ENCODE measurements at regions of chr17 and their contacts with region 1.

Region 1: GRCh38 chr17:51371732-51372151 is 111.4 kb downstream of the UTP18 start:
- DNase-seq: peak; percentile 28
- ATAC-seq: peak; percentile 94
- H3K4me3 ChIP-seq: no peak overlapping the region
- H3K27ac ChIP-seq: no peak overlapping the region
- H3K4me1 ChIP-seq: no peaks in the 10 kb centered on the region
- H3K27me3 ChIP-seq: peaks cover 5% of the 10 kb centered on the region; the same call in 1 of the 2 replicates
- CTCF ChIP-seq: peak; percentile 87

Region 2: GRCh38 chr17:50931144-50931908 is 440.4 kb before region 1 on chr17:
- CTCF ChIA-PET with region 1: no interaction called
- POLR2A ChIA-PET with region 1: no interaction called
- in situ Hi-C with region 1: no loop called
- intact Hi-C with region 1: no loop called
- DNase-seq: no peak
- ATAC-seq: peak; percentile 61
- H3K4me3 ChIP-seq: peak overlapping the region; percentile 30 to 55
- H3K27ac ChIP-seq: peak overlapping the region; percentile 41; the same call in 1 of the 2 replicates
- H3K4me1 ChIP-seq: 0 out of 2 replicates have a peak, but pooled peaks cover 5% of the 10 kb centered on the region
- H3K27me3 ChIP-seq: no peaks in the 10 kb centered on the region
- CTCF ChIP-seq: no peak

Region 3: GRCh38 chr17:51279183-51279582 is 92.6 kb before region 1 on chr17:
- CTCF ChIA-PET with region 1: no interaction called
- POLR2A ChIA-PET with region 1: no interaction called
- in situ Hi-C with region 1: no loop called
- intact Hi-C with region 1: no loop called
- DNase-seq: no peak
- ATAC-seq: no peak
- H3K4me3 ChIP-seq: no peak overlapping the region
- H3K27ac ChIP-seq: no peak overlapping the region
- H3K4me1 ChIP-seq: no peaks in the 10 kb centered on the region
- H3K27me3 ChIP-seq: no peaks in the 10 kb centered on the region
- CTCF ChIP-seq: no peak

Region 4: DNA sequence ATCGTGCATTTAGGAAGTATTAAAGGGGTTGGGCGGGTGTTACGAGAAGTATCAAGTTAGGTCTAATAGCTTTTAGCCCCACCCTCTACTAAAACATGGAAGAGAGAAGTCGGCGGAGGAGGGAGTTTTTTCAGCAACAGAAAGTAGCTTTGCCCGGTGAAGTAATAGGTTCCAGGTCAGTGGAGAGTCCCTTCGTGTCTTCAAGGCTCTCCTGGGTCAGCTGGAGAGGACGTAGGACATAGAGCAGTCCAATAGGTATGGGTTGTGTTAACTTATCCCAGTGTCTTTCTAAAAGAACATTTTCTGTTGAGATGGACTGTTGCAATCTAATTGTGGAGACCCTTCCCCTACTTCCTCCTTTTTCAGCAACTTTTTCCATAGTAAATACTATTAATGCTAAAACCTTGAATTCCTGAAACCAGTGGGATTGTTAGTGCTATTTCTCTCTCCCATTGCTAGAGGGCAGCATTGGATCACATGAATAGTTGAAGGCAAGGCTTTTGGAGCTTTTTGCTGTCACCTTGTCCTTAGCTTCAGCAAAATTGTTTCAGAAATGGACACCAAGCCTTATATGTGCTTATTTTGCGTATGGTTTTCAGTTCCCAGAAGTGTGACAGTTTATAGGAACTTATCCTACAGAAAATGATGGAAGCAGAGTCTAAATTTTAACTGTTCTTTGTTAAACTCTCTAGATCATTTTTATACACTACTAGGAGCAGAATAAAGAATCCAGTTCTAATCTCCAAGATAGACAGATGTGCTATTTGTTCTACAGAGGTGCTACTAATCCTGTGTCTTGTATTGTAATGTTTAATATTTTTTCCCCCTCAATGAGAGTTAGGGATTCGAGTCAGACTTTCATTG is 73.0 kb before region 1 on chr17:
- CTCF ChIA-PET with region 1: interaction called, 12 read pairs
- POLR2A ChIA-PET with region 1: no interaction called
- in situ Hi-C with region 1: no loop called
- intact Hi-C with region 1: no loop called
- DNase-seq: peak; percentile 18
- ATAC-seq: peak; percentile 74
- H3K4me3 ChIP-seq: no peak overlapping the region
- H3K27ac ChIP-seq: no peak overlapping the region
- H3K4me1 ChIP-seq: no peaks in the 10 kb centered on the region
- H3K27me3 ChIP-seq: no peaks in the 10 kb centered on the region
- CTCF ChIP-seq: peak; percentile 78

Region 5: DNA sequence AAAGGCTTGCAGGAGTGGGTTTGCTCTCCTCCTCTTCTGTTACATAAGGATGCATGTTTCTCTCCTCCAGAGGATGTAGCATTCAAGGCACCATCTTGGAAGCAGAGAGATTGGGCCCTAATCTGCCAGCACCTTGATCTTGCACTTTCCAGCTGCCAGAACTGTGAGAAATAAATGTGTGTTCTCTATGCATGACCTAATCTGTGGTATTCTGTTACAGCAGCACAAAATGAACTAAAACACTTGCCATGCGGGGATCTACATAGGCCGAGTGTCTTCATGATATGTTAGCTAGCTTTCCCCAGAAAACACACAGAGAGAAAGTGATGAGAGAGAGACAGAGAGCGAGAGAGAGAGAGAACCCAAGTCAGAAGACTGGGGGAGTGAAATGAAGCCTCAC is 162.1 kb after region 1 on chr17:
- CTCF ChIA-PET with region 1: interaction called, 3 read pairs
- POLR2A ChIA-PET with region 1: no interaction called
- in situ Hi-C with region 1: no loop called
- intact Hi-C with region 1: loop called (anchors 2 kb)
- DNase-seq: no peak
- ATAC-seq: no peak
- H3K4me3 ChIP-seq: no peak overlapping the region
- H3K27ac ChIP-seq: no peak overlapping the region
- H3K4me1 ChIP-seq: no peaks in the 10 kb centered on the region
- H3K27me3 ChIP-seq: no peaks in the 10 kb centered on the region
- CTCF ChIP-seq: no peak

Region 6: DNA sequence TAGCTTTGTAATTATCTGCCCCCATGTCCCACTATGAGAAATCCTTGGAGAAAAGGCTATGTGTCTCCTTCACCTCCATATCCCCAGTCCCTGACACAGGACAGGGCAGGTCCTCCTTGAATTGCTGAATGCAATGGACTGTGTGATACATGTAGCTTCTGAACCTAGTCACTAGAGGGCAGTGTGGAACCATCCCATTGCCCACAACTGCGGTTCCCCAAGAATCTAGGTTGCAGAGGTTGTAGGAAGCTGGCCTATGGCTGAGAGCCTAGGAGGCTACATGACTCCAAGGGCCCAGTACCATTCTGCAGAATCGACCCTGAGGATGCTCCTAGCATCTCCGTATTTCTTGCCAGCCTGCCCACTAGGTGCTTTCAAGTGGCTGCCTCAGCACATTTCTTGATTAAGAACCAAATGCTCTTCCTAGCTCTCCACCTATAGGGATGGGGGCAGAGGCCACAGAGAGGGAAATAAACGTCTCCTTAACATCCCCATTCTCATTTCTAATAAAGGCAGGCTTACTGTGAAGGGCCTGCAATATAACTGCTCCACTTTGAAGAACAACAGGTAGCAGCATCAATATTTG is 392.7 kb after region 1 on chr17:
- CTCF ChIA-PET with region 1: no interaction called
- POLR2A ChIA-PET with region 1: no interaction called
- in situ Hi-C with region 1: no loop called
- intact Hi-C with region 1: loop called (anchors 5 kb)
- DNase-seq: peak; percentile 55
- ATAC-seq: peak; percentile 99
- H3K4me3 ChIP-seq: no peak overlapping the region
- H3K27ac ChIP-seq: no peak overlapping the region
- H3K4me1 ChIP-seq: no peaks in the 10 kb centered on the region
- H3K27me3 ChIP-seq: no peaks in the 10 kb centered on the region
- CTCF ChIP-seq: peak; percentile 94

Region 7: DNA sequence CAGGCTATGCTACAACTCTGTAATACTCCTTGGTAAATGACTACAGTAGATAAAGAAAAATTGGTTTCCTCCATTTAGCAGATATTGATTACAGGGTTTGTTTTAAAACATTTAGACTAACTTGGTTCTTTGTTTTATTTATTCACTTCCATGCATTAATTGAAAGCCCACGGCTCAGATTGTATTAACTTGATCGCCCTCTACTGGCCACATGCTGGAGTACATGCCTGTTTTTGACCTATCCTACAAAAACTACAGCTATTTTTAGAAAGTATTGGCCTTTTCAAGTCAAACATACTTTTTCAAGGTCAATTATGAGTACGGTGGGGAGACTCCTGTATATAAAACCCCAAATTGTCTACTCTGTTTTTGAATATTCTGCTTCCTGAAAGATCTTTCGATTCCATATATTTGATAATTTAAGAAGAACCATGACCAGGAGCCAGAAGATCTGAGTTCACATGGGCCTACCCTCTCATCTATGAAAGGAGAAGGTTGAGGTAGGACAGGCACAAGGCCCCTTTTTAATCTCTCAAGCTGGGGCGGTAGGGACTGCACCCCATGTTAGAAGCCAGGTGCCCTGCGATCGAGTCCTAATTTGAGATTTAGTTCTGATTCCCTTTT is 735.0 kb after region 1 on chr17:
- CTCF ChIA-PET with region 1: interaction called, 4 read pairs
- POLR2A ChIA-PET with region 1: no interaction called
- in situ Hi-C with region 1: no loop called
- intact Hi-C with region 1: loop called (anchors 10 kb)
- DNase-seq: peak; percentile 13
- ATAC-seq: no peak
- H3K4me3 ChIP-seq: no peak overlapping the region
- H3K27ac ChIP-seq: no peak overlapping the region
- H3K4me1 ChIP-seq: no peaks in the 10 kb centered on the region
- H3K27me3 ChIP-seq: no peaks in the 10 kb centered on the region
- CTCF ChIP-seq: peak; percentile 79; the same call in 1 of the 2 replicates

Measured in Panc1 (cell line).